Naive thymus-derived CD4-positive, alpha-beta T cell (primary cell): ENCODE measurements at regions of chr3 and their contacts with region 1.

Region 1: DNA sequence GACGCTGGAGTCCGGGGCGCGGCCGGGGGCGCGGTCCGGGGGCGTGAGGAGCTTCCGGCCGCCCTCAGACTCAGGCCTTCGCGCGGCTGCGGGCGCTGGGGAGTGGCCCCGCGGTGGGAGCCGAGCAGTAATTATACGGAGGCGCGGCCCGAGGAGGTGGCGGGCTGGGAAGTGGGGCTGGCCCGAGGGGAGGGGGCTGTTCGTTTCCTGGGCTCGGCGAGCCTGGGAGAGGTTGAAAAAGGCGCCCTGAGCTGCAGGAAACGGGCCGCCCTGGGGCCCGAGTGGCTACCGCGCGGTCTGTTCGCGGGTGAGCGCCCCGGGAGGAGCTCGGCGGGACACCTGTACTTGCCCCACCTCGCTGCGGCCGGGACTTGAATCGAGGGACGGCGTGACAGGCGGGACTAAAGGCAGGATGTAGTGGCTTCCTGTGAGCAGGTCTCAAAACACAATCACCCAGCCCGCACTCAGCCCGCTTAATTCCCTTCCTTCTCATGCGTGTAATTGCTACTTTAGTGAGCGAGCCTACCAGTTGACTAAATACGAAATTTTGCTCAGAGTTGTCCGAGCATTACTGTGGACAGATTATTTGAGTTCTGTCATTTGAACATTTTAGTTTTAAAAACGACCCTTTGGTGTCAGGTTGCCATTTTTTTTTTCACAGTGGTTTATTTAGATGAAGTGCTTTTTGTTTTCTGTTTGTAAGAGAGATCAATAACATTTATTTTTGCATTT is 860 bp downstream of the RASA2 start:
- DNase-seq: peak in 8 of 9 donors; percentile 65 to 88 (median 86)
- ATAC-seq: peak; percentile 71
- H3K4me3 ChIP-seq: peak overlapping the region; percentile 65
- H3K4me3 Mint-ChIP-seq: peak overlapping the region; percentile 89 to 97 (median 92)
- H3K27ac ChIP-seq: peak overlapping the region; percentile 94
- H3K27ac Mint-ChIP-seq: peak overlapping the region; percentile 90 to 97 (median 93)
- H3K4me1 ChIP-seq: peaks cover 62% of the 10 kb centered on the region in 2 donors
- H3K4me1 Mint-ChIP-seq: peaks cover 53 to 83% (median 74%) of the 10 kb centered on the region in 7 donors
- H3K27me3 ChIP-seq: no peaks in the 10 kb centered on the region
- H3K27me3 Mint-ChIP-seq: no peaks in the 10 kb centered on the region

Region 2: GRCh38 chr3:141321109-141321497 is 166.6 kb before region 1 on chr3:
- CTCF ChIA-PET with region 1: no interaction called
- POLR2A ChIA-PET with region 1: no interaction called
- intact Hi-C with region 1: no loop called
- DNase-seq: no peak
- ATAC-seq: peak; percentile 22
- H3K4me3 ChIP-seq: peak overlapping the region; percentile 24
- H3K4me3 Mint-ChIP-seq: peak overlapping the region in 8 of 10 donors; percentile 26 to 78 (median 64)
- H3K27ac ChIP-seq: peak overlapping the region; percentile 52
- H3K27ac Mint-ChIP-seq: peak overlapping the region in 8 of 9 donors; percentile 69 to 95 (median 90)
- H3K4me1 ChIP-seq: peaks cover 15 to 25% of the 10 kb centered on the region in 2 donors
- H3K4me1 Mint-ChIP-seq: peaks cover 13 to 41% (median 30%) of the 10 kb centered on the region in 7 donors
- H3K27me3 ChIP-seq: no peaks in the 10 kb centered on the region
- H3K27me3 Mint-ChIP-seq: peaks cover 0 to 1% (median 0%) of the 10 kb centered on the region in 5 donors

Region 3: GRCh38 chr3:141460097-141460704 is 27.5 kb before region 1 on chr3:
- CTCF ChIA-PET with region 1: interaction called, 4 read pairs
- POLR2A ChIA-PET with region 1: interaction called, 5 read pairs
- intact Hi-C with region 1: loop called in 1 of 2 experiments (anchors 1 kb)
- DNase-seq: peak; percentile 72 to 88 (median 82)
- ATAC-seq: peak; percentile 100
- H3K4me3 ChIP-seq: no peak overlapping the region
- H3K4me3 Mint-ChIP-seq: no peak overlapping the region
- H3K27ac ChIP-seq: no peak overlapping the region
- H3K27ac Mint-ChIP-seq: peak overlapping the region in 1 of 9 donors; percentile 43
- H3K4me1 ChIP-seq: no peaks in the 10 kb centered on the region
- H3K4me1 Mint-ChIP-seq: peaks cover 0 to 20% (median 5%) of the 10 kb centered on the region in 7 donors
- H3K27me3 ChIP-seq: no peaks in the 10 kb centered on the region
- H3K27me3 Mint-ChIP-seq: peaks cover 0 to 2% (median 0%) of the 10 kb centered on the region in 5 donors

Region 4: DNA sequence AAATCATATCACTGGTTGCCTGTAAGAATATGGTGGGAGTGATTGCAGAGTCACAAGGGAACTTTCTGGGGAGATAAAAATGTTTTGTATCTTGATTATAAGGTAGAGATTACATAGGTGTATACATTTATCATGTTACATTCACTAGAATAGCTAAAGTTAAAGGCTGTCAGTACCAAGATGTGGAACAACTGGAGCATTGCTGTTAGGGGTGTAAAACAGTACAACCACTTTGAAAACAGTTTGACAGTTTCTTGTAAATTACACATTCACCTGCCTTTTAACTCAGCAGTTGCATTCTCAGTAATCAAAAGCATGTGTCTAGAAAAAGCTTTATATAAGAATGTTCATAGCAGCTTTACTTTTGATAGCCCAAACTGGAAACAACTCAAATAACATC is 26.7 kb after region 1 on chr3:
- CTCF ChIA-PET with region 1: interaction called, 9 read pairs
- POLR2A ChIA-PET with region 1: interaction called, 18 read pairs
- intact Hi-C with region 1: no loop called
- DNase-seq: no peak
- ATAC-seq: no peak
- H3K4me3 ChIP-seq: no peak overlapping the region
- H3K4me3 Mint-ChIP-seq: peak overlapping the region in 1 of 10 donors; percentile 18
- H3K27ac ChIP-seq: no peak overlapping the region
- H3K27ac Mint-ChIP-seq: peak overlapping the region in 5 of 9 donors; percentile 22 to 59 (median 44)
- H3K4me1 ChIP-seq: peaks cover 22 to 34% of the 10 kb centered on the region in 2 donors
- H3K4me1 Mint-ChIP-seq: peaks cover 29 to 86% (median 78%) of the 10 kb centered on the region in 7 donors
- H3K27me3 ChIP-seq: no peaks in the 10 kb centered on the region
- H3K27me3 Mint-ChIP-seq: no peaks in the 10 kb centered on the region

Region 5: DNA sequence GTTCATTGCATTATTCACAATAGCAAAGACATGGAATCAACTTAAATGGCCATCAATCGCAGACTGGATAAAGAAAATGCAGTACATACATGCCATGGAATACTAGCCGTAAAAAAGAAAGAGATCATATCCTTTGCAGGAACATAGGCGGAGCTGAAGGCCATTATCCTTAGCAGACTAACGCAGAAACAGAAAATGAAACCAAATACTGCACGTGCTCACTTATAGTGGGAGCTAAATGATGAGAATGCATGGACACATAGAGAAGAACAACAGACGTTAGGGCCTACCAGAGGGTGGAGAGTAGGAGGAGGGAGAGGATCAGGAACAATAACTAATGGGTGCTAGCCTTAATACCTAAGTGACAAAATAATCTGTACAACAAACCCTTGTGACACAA is 57.0 kb after region 1 on chr3:
- CTCF ChIA-PET with region 1: interaction called, 4 read pairs
- POLR2A ChIA-PET with region 1: interaction called, 31 read pairs
- intact Hi-C with region 1: no loop called
- DNase-seq: peak in 7 of 9 donors; percentile 10 to 51 (median 38)
- ATAC-seq: peak; percentile 79
- H3K4me3 ChIP-seq: no peak overlapping the region
- H3K4me3 Mint-ChIP-seq: peak overlapping the region; percentile 49 to 86 (median 63)
- H3K27ac ChIP-seq: peak overlapping the region; percentile 34
- H3K27ac Mint-ChIP-seq: peak overlapping the region; percentile 56 to 96 (median 89)
- H3K4me1 ChIP-seq: peaks cover 11 to 13% of the 10 kb centered on the region in 2 donors
- H3K4me1 Mint-ChIP-seq: peaks cover 44 to 93% (median 90%) of the 10 kb centered on the region in 7 donors
- H3K27me3 ChIP-seq: no peaks in the 10 kb centered on the region
- H3K27me3 Mint-ChIP-seq: no peaks in the 10 kb centered on the region

Region 6: DNA sequence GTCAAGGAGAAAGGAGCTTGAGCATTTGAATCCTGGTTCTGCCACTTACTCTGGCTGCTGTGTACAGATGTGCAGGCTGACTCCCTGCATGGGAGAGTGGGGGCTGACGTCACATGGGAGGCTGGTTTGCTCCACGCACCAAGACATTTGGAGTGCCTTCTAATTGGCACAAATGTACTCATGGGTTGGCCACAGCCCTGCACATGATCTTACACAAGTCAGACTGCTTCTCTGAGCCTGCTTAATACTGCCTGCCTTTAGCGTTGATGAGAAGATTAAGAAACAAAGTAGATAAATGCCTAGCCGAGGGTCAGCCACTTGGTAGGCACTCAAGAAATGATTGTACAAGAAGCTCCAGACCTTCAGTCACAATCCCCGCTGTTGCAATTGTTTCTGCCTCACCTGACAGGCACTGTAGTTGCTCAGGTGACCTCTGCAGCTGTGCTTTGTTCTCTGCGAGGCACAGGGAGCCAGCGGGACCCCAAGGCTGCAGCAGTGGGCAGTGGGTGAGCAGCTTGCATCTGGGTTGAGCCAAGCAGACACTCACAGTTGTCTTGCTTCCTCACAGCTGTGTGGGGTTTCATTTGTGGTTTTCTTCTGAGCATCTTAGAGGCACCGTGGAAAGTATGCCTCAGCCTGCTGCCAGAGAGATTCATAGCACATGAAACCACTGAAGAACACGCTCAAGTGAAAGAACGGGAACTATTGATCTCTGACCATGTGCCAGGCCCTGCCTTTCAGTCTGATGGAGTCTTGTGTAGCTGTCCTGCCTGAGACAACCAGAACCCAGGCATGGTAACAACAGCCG is 308.6 kb after region 1 on chr3:
- CTCF ChIA-PET with region 1: no interaction called
- POLR2A ChIA-PET with region 1: interaction called, 11 read pairs
- intact Hi-C with region 1: loop called in 1 of 2 experiments (anchors 10 kb)
- DNase-seq: peak; percentile 14 to 78 (median 61)
- ATAC-seq: peak; percentile 82
- H3K4me3 ChIP-seq: peak overlapping the region; percentile 68
- H3K4me3 Mint-ChIP-seq: peak overlapping the region; percentile 86 to 97 (median 90)
- H3K27ac ChIP-seq: peak overlapping the region; percentile 79
- H3K27ac Mint-ChIP-seq: peak overlapping the region; percentile 92 to 99 (median 97)
- H3K4me1 ChIP-seq: peaks cover 48 to 56% of the 10 kb centered on the region in 2 donors
- H3K4me1 Mint-ChIP-seq: peaks cover 45 to 71% (median 60%) of the 10 kb centered on the region in 7 donors
- H3K27me3 ChIP-seq: no peaks in the 10 kb centered on the region
- H3K27me3 Mint-ChIP-seq: peaks cover 0 to 2% (median 0%) of the 10 kb centered on the region in 5 donors